ENCODE measurements at regions of chr11 and their contacts with region 1.

Region 1: GRCh38 chr11:93652161-93652597 is 9.3 kb upstream of the CEP295 start:
- DNase-seq: peak in 4 of 7 donors; percentile 21 to 56 (median 48)
- H3K4me3 ChIP-seq: no peak overlapping the region
- H3K27ac ChIP-seq: no peak overlapping the region
- H3K4me1 ChIP-seq: no peaks in the 10 kb centered on the region
- H3K27me3 ChIP-seq: peaks cover 3% of the 10 kb centered on the region
- CTCF ChIP-seq: peak; percentile 66 to 93 (median 78)
- POLR2A ChIP-seq: no peak

Region 2: DNA sequence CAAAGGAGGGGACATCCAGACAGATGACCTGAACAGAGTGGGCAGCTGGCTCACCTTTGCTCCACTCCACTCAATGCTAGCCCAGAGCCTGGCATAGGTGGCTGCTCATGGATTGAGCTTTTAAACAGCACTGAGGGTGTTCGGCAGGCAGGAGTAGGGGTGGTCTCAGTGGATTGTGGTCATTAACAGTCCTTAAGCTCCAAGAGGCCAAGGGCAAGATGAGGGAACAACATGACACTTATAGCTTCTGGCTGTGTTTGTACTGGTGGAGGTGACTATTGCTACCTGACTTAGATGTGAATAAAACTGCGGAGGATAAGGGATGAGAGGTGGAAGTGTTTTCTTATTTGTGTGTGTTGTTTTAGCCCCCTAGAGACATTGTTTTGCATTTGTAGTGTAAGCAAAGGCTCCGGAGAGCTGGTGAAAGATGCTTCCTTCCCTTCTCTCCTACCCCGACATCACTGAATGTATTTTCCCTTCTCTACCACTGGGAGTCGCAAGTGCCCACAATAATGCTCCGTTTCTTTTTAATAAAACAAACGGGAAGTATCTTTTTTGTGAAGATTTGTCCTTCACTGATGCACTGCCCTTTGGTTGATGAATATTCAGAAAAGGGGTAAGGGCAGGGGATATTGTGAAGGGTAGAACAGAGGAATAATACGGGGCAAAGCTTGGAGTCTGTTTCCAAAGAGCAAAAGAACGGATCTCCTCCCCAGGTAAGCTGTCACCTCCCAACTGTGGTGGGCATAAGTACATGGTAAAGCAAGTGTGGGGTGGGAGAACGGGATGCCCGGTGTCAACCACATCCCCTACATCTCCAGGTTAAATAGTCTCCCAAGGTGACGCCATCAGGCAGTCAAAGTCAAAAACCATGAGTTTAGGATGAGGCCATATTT is 710.3 kb before region 1 on chr11:
- intact Hi-C with region 1: loop called in 1 of 2 experiments (anchors 10 kb)
- DNase-seq: peak in 5 of 7 donors; percentile 13 to 42 (median 23)
- H3K4me3 ChIP-seq: no peak overlapping the region
- H3K27ac ChIP-seq: no peak overlapping the region
- H3K4me1 ChIP-seq: no peaks in the 10 kb centered on the region
- H3K27me3 ChIP-seq: no peaks in the 10 kb centered on the region
- CTCF ChIP-seq: peak; percentile 58 to 85 (median 74)
- POLR2A ChIP-seq: no peak

Region 3: GRCh38 chr11:93234602-93235207 is 417.5 kb before region 1 on chr11:
- intact Hi-C with region 1: loop called (anchors 2 to 5 kb)
- DNase-seq: peak; percentile 79 to 95 (median 90)
- H3K4me3 ChIP-seq: no peak overlapping the region
- H3K27ac ChIP-seq: no peak overlapping the region
- H3K4me1 ChIP-seq: peaks cover 4 to 12% of the 10 kb centered on the region in 2 donors
- H3K27me3 ChIP-seq: no peaks in the 10 kb centered on the region
- CTCF ChIP-seq: peak; percentile 87 to 98 (median 97)
- POLR2A ChIP-seq: no peak

Region 4: GRCh38 chr11:93487032-93487483 is 165.1 kb before region 1 on chr11:
- intact Hi-C with region 1: loop called in 1 of 2 experiments (anchors 10 kb)
- DNase-seq: peak in 5 of 7 donors; percentile 31 to 61 (median 45)
- H3K4me3 ChIP-seq: no peak overlapping the region
- H3K27ac ChIP-seq: no peak overlapping the region
- H3K4me1 ChIP-seq: peaks cover 10 to 13% of the 10 kb centered on the region in 2 donors
- H3K27me3 ChIP-seq: no peaks in the 10 kb centered on the region
- CTCF ChIP-seq: no peak
- POLR2A ChIP-seq: no peak

Region 5: DNA sequence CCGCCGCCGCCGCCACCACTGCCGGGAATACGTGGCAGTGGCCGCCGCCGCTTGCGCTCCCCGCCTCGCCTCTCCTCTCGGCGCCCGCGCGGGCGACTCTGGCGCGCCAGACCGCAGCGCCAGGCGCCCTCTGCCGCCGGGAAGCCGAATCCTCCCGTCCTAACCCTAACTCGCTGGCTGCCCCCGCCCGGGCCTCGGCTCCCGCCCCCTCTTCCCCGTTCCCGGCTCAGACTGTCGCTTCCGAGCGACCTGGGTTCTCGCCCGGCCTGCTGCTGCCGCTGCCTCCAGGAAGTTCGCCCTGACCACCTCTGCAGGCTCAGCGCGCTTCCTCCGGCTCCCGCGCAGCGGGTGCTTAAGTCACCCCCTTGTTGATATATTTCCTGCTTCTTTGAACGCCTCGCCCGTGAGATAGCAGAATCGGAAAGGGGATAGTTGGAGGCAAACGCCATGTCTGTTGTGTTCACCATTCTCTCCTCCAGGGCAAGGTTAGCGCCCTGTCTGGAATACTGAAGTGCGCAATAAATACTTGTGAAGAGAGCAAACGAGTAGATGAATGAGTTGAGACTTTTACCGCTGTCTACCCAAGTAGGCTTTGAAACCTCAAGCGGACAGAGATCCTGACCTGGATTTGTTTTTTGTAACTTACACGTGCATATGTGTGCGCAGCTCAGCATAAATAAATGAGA is 108.7 kb before region 1 on chr11 and contains the start of gene SMCO4:
- intact Hi-C with region 1: loop called (anchors 5 to 10 kb)
- DNase-seq: peak; percentile 82 to 89 (median 87)
- H3K4me3 ChIP-seq: peak within 1 kb of the TSS in 3 of 4 donors; percentile 65 to 94 (median 65)
- H3K27ac ChIP-seq: peak within 1 kb of the TSS; percentile 62 to 93 (median 90)
- H3K4me1 ChIP-seq: peaks cover 16 to 38% of the 10 kb centered on the region in 2 donors
- H3K27me3 ChIP-seq: no peaks in the 10 kb centered on the region
- CTCF ChIP-seq: peak; percentile 39 to 85 (median 66)
- POLR2A ChIP-seq: peak; percentile 43 to 51
- total RNA-seq, gene SMCO4: 23.2 to 108 (median 78.0) TPM

Region 6: DNA sequence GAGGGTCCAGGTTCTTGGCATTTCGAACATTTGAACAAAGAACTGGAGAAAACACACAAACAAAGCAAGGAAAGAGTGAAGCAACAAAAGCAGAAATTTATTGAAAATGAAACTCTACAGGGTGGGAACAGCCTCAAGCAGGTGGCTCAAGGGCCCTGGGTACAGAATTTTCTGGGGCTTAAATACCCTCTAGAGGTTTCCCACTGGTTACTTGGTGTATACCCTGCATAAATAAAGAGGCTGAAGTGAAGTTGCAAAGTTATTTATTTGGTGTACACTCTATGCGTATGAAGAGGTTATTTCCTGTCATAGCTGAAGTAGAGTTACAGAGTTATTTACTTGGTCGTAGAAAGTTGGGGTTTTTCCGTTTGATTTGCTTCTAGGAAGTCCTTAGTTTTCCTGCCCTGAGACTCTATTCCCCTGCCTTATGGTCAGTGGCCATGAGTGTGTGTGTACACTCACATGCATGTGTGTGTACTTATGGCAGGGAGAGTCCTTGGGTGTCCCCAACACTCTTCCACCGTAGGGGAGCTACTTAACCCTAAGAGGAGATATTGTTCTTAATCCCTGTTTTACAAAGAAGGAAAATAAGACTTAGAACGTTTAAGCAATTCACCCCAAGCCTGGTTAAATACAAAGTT is 103.4 kb before region 1 on chr11:
- intact Hi-C with region 1: loop called (anchors 5 to 10 kb)
- DNase-seq: peak in 1 of 7 donors; percentile 20
- H3K4me3 ChIP-seq: no peak overlapping the region
- H3K27ac ChIP-seq: no peak overlapping the region
- H3K4me1 ChIP-seq: peaks cover 0 to 6% of the 10 kb centered on the region in 2 donors
- H3K27me3 ChIP-seq: no peaks in the 10 kb centered on the region
- CTCF ChIP-seq: no peak
- POLR2A ChIP-seq: no peak

Region 7: DNA sequence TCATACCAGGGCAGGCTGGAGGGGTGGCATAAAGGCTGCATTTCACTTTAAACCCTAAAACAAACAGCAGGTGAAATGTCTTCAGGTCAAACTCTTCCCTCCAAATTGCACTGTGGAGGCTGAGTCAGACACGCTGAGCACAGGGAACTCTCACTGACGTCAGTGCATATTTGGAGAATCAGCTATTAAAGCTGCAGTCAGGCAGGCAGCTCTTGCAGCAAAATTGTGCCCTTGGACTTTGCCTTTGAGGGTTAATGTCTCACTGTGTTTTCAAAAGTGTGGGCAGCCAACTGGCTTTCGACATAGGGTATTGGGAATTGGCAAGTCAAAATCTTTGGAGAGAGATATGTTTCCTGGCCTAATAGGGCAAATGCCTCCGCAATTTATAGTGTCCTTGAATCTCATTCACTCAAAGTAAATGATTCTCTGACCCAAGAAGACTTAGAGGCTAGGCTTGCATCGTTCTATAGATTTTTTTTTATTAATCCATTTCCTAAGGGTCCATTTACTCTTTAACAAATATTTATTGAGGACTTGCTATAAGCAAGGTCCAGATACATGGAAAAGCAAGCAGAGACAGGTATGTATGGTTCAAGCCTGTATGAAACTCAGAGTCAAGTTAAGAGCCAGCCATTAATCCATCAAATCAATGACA is 81.3 kb before region 1 on chr11:
- intact Hi-C with region 1: no loop called
- DNase-seq: peak; percentile 63 to 90 (median 83)
- H3K4me3 ChIP-seq: no peak overlapping the region
- H3K27ac ChIP-seq: peak overlapping the region in 3 of 5 donors; percentile 10 to 42 (median 27)
- H3K4me1 ChIP-seq: peaks cover 12 to 15% of the 10 kb centered on the region in 2 donors
- H3K27me3 ChIP-seq: no peaks in the 10 kb centered on the region
- CTCF ChIP-seq: no peak
- POLR2A ChIP-seq: peak in 1 of 2 donors; percentile 18

Region 8: DNA sequence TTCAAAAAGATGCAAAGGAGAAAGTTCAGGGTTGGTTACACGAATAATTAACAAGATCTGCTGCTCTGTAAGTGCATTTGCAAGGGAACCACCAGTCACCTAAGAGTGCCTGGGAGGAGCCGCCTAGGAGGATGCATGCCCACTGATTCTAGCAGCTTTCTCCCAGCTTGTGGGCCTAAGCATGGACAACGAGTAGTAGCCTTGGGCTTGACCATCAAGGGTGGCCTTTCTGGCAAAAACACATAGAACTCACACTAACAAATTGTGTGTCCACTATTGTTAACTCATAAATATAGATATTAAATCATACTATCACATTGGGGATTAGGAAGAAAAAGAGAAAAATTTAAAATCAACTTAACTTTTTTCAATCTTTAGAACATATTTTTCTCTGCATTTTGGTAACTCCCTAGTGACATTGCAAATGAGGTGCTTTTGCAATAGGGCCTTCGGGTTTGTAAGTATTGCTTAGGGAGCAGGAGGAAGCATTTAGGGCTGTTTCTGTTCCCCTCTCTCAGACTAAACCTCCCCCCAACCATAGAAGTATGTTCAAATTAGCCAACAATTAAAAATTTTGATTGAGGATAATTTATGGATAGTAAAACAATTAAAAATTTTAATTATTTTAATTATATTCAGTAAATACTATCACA is 48.0 kb before region 1 on chr11:
- intact Hi-C with region 1: no loop called
- DNase-seq: no peak
- H3K4me3 ChIP-seq: no peak overlapping the region
- H3K27ac ChIP-seq: no peak overlapping the region
- H3K4me1 ChIP-seq: no peaks in the 10 kb centered on the region
- H3K27me3 ChIP-seq: no peaks in the 10 kb centered on the region
- CTCF ChIP-seq: no peak
- POLR2A ChIP-seq: no peak